ENCODE measurements at regions of chr9 and their contacts with region 1.

Region 1: GRCh38 chr9:130940693-130941576 is 1.9 kb upstream of the FIBCD1 start:
- DNase-seq: peak; percentile 89
- H3K4me3 ChIP-seq: no peak overlapping the region
- H3K27ac ChIP-seq: no peak overlapping the region
- H3K4me1 ChIP-seq: peaks cover 21 to 43% (median 36%) of the 10 kb centered on the region in 4 donors
- H3K27me3 ChIP-seq: peaks cover 20 to 83% (median 74%) of the 10 kb centered on the region in 3 donors
- CTCF ChIP-seq: peak in 5 of 7 experiments; percentile 70 to 87 (median 78)
- EP300 ChIP-seq: no peak
- POLR2A ChIP-seq: no peak

Region 2: DNA sequence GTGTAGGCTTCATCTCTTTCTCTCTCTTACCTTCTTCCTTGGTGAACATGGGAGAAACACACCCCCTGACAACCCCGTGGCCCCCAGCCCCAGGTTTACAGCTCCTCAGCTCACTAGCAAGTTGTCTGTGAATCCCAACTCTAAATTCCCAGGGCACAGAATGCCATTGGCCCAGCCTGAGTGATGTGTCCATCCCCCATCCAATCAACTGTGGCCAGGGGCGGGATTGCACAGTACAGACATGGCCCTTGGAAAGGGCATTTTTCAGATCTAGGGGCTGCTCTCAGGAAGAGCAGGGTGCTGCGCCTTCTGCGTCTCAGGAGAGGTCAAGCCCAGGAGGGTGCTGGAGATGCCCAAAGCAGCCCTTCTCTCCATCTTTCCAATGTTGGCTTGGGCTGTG is 544.4 kb before region 1 on chr9:
- intact Hi-C with region 1: no loop called
- DNase-seq: no peak
- H3K4me3 ChIP-seq: no peak overlapping the region
- H3K27ac ChIP-seq: no peak overlapping the region
- H3K4me1 ChIP-seq: no peaks in the 10 kb centered on the region
- H3K27me3 ChIP-seq: peaks cover 0 to 15% (median 0%) of the 10 kb centered on the region in 3 donors
- CTCF ChIP-seq: no peak
- EP300 ChIP-seq: no peak
- POLR2A ChIP-seq: no peak

Region 3: DNA sequence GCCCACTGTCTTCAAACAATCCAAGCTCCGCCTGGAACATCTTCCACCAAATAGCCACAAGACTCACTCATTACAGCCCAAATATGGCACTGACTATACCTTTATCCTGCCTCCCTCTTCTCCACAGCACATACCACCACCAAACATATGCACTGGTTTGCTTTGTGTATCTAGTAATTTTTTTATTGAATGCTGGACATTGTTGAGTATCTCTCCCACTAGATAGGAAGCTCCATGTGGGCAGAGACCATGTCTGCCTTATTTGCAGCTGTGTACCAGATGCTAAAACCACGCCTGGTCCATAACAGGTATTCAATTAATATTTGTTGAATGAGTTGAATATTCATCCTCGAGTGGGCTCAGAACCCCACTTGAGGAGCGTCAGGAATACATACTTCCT is 428.7 kb before region 1 on chr9:
- intact Hi-C with region 1: no loop called
- DNase-seq: no peak
- H3K4me3 ChIP-seq: no peak overlapping the region
- H3K27ac ChIP-seq: no peak overlapping the region
- H3K4me1 ChIP-seq: no peaks in the 10 kb centered on the region
- H3K27me3 ChIP-seq: peaks cover 0 to 12% (median 0%) of the 10 kb centered on the region in 3 donors
- CTCF ChIP-seq: no peak
- EP300 ChIP-seq: no peak
- POLR2A ChIP-seq: no peak

Region 4: GRCh38 chr9:130707225-130707976 is 233.5 kb before region 1 on chr9:
- intact Hi-C with region 1: loop called (anchors 5 kb)
- DNase-seq: peak; percentile 80 to 89
- H3K4me3 ChIP-seq: no peak overlapping the region
- H3K27ac ChIP-seq: no peak overlapping the region
- H3K4me1 ChIP-seq: peaks cover 0 to 11% (median 5%) of the 10 kb centered on the region in 4 donors
- H3K27me3 ChIP-seq: no peaks in the 10 kb centered on the region
- CTCF ChIP-seq: peak in 5 of 7 experiments; percentile 41 to 84 (median 70)
- EP300 ChIP-seq: no peak
- POLR2A ChIP-seq: no peak

Region 5: DNA sequence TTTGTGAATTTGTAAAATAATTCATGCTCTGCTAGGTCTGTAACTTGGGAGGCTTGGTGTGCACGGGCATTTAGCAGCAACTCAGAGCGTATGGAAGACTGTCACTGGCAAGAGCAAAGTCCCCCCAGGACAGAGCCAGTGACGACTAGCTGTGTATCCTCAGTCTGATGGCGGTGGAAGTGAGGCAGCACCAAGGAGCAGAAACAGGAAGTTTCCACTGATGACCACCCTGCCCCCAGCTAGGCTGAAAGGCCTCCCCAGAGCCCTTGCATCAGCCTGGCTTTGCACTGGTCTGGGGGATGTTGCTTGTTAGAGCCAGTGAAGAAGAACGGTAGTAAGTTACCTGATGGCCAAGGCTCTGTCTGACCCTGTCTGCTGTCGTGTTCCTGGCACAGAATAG is 172.7 kb before region 1 on chr9:
- intact Hi-C with region 1: loop called (anchors 10 kb)
- DNase-seq: peak in 1 of 2 donors; percentile 44
- H3K4me3 ChIP-seq: no peak overlapping the region
- H3K27ac ChIP-seq: no peak overlapping the region
- H3K4me1 ChIP-seq: peaks cover 7 to 46% (median 27%) of the 10 kb centered on the region in 4 donors
- H3K27me3 ChIP-seq: no peaks in the 10 kb centered on the region
- CTCF ChIP-seq: no peak
- EP300 ChIP-seq: no peak
- POLR2A ChIP-seq: no peak